ENCODE measurements at regions of chr9 and their contacts with region 1.

Region 1: GRCh38 chr9:89000973-89001916 is 10.0 kb downstream of the S1PR3 start:
- DNase-seq: peak; percentile 72 to 89 (median 83)
- ATAC-seq: peak; percentile 83
- H3K4me3 ChIP-seq: no peak overlapping the region
- H3K4me1 ChIP-seq: peaks cover 6% of the 10 kb centered on the region
- CTCF ChIP-seq: peak; percentile 47

Region 2: GRCh38 chr9:88494983-88495721 is 506.1 kb before region 1 on chr9:
- intact Hi-C with region 1: no loop called
- DNase-seq: no peak
- ATAC-seq: no peak
- H3K4me3 ChIP-seq: no peak overlapping the region
- H3K4me1 ChIP-seq: no peaks in the 10 kb centered on the region
- CTCF ChIP-seq: no peak

Region 3: GRCh38 chr9:88593537-88594185 is 407.6 kb before region 1 on chr9:
- intact Hi-C with region 1: loop called (anchors 5 kb)
- DNase-seq: peak in 1 of 3 donors; percentile 79
- ATAC-seq: peak; percentile 56
- H3K4me3 ChIP-seq: no peak overlapping the region
- H3K4me1 ChIP-seq: no peaks in the 10 kb centered on the region
- CTCF ChIP-seq: no peak

Measured in mucosa of descending colon (tissue), 3 donors.